Activated CD4-positive, alpha-beta memory T cell treated with anti-CD3 and anti-CD28 coated beads for 36 hours (primary cell): ENCODE measurements at regions of chr7 and their contacts with region 1.

Region 1: DNA sequence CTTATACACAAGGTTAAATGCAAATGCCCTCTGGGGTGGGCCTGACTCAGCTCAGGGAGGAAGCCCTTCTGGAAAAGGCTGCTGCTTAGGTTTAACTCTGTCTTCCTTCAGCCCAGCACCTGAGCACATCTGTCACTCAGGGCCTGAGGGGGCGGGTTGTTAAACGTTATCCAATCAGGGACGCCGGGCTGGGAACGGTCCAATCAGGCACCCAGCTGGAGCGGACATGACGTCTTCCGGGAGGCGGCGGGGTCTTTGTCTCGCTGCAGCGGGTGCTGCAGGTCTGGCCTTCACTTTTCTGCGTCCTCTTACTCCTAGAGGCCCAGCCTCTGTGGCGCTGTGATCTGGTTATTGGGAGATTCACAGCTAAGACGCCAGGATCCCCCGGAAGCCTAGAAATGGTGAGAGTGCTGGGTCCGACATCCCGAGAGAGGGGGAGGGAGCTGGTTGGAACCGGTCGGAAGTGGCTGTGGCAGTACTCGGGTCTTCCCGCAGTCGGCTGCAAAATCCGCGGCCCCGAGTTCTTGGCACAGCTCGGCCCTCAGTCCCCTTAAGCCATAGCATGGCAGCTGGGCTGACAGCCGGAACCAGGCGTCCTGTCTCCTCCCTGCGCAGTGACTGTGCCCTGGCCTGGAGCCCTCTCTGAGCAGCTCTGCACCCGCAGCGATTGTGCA is at the start of gene ZNF138:
- DNase-seq: peak; percentile 97
- H3K4me3 Mint-ChIP-seq: peak within 1 kb of the TSS; percentile 99
- H3K27ac Mint-ChIP-seq: peak within 1 kb of the TSS; percentile 97
- H3K4me1 Mint-ChIP-seq: peaks cover 18% of the 10 kb centered on the region
- H3K27me3 Mint-ChIP-seq: no peaks in the 10 kb centered on the region
- total RNA-seq, gene ZNF138: 10.3 to 10.5 TPM

Region 2: GRCh38 chr7:64665980-64666662 is 128.2 kb before region 1 on chr7 and contains the start of gene ZNF107:
- CTCF ChIA-PET with region 1: no interaction called
- POLR2A ChIA-PET with region 1: interaction called, 10 read pairs
- intact Hi-C with region 1: loop called (anchors 2 kb)
- DNase-seq: peak; percentile 94
- H3K4me3 Mint-ChIP-seq: peak within 1 kb of the TSS; percentile 90
- H3K27ac Mint-ChIP-seq: peak within 1 kb of the TSS; percentile 95
- H3K4me1 Mint-ChIP-seq: peaks cover 43% of the 10 kb centered on the region
- H3K27me3 Mint-ChIP-seq: no peaks in the 10 kb centered on the region
- total RNA-seq, gene ZNF107: 13.5 to 14.3 TPM

Region 3: DNA sequence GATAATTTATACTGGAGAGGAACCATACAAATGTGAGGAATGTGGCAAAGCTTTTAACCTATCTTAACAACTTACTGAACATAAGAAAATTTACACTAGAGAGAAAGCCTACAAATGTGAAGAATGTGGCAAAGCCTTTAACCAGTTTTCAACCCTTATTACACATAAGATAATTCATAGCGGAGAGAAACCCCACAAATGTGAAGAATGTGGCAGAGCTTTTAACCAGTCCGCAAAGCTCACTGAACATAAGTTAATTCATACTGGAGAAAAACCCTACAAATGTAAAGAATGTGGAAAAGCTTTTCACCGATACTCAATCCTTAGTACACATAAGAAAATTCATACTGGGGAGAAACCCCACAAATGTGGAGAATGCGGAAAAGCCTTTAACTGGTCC is 37.8 kb after region 1 on chr7:
- CTCF ChIA-PET with region 1: no interaction called
- POLR2A ChIA-PET with region 1: no interaction called
- intact Hi-C with region 1: no loop called
- DNase-seq: no peak
- H3K4me3 Mint-ChIP-seq: no peak overlapping the region
- H3K27ac Mint-ChIP-seq: no peak overlapping the region
- H3K4me1 Mint-ChIP-seq: no peaks in the 10 kb centered on the region
- H3K27me3 Mint-ChIP-seq: no peaks in the 10 kb centered on the region

Region 4: GRCh38 chr7:65373608-65374351 is 579.5 kb after region 1 on chr7 and contains the start of gene ZNF92:
- CTCF ChIA-PET with region 1: no interaction called
- POLR2A ChIA-PET with region 1: no interaction called
- intact Hi-C with region 1: loop called (anchors 5 kb)
- DNase-seq: peak; percentile 98
- H3K4me3 Mint-ChIP-seq: peak within 1 kb of the TSS; percentile 95
- H3K27ac Mint-ChIP-seq: peak within 1 kb of the TSS; percentile 88
- H3K4me1 Mint-ChIP-seq: peaks cover 30% of the 10 kb centered on the region
- H3K27me3 Mint-ChIP-seq: no peaks in the 10 kb centered on the region
- total RNA-seq, gene ZNF92: 12.9 to 13.9 TPM